ENCODE measurements at regions of chr11 and their contacts with region 1.

Region 1: GRCh38 chr11:78228467-78228866 is 39.7 kb downstream of the USP35 start:
- ATAC-seq: peak; percentile 49 to 79 (median 64)
- H3K4me3 ChIP-seq: no peak overlapping the region
- H3K27ac ChIP-seq: no peak overlapping the region
- H3K4me1 ChIP-seq: peaks cover 6 to 11% of the 10 kb centered on the region in 2 donors

Region 2: GRCh38 chr11:78397387-78397786 is 168.9 kb after region 1 on chr11:
- in situ Hi-C with region 1: loop called in 1 of 9 experiments (anchors 25 kb)
- ATAC-seq: no peak
- H3K4me3 ChIP-seq: no peak overlapping the region
- H3K27ac ChIP-seq: no peak overlapping the region
- H3K4me1 ChIP-seq: peaks cover 0 to 4% of the 10 kb centered on the region in 2 donors

Region 3: GRCh38 chr11:78564490-78565467 is 336.3 kb after region 1 on chr11:
- in situ Hi-C with region 1: loop called in 5 of 9 experiments (anchors 10 to 25 kb)
- ATAC-seq: peak in 4 of 8 experiments; percentile 41 to 67 (median 57)
- H3K4me3 ChIP-seq: no peak overlapping the region
- H3K27ac ChIP-seq: no peak overlapping the region
- H3K4me1 ChIP-seq: peaks cover 6 to 13% of the 10 kb centered on the region in 2 donors

Region 4: DNA sequence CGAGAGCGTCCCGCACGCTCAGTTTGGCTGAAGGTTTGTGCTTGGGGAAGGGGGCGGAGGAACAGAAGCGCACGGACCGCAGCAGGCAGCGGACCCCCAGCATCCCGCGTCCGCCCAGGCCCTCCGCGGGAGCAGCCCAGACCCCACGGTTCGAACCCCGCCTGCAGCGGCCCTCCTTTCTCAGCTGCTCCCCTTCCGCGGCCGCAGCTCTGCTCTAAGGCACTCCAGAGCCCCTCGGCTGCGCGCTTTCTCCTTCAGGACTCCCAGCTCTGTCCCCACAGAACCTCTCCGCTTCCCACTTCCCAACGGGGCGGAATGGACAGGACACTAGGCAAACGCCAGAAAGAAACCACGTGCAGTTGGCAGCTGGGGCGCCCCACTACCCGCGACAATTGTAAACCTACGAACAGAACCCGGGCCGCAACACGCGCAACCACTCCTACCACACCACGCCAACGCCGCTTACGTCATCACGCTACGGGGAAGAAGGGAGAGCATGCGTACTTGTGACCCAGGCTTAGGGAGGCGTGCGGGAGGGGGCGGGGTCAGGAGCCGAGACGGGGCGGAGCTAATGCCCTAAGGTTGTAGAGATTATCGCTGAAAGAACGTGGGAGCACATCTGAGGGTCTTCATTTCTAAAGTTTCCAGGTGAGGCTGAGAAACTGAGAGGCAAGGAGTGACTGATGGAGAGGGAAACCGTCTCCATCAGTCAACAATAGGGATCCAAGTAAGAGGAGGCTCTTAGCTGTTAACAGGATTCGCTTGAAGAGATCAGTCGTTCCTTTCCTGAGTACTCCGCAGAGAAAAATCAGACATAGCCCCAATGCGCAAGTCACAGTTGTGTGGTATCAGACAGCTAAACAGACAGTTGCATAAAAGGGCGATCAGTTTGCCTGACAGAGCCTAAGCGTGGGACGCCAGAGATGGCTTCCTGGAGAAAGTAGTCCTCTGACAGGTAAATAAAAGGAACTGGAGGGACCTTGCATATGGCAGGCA is 346.2 kb after region 1 on chr11 and contains the start of gene NARS2:
- in situ Hi-C with region 1: loop called in 5 of 9 experiments (anchors 10 to 25 kb)
- ATAC-seq: peak; percentile 93 to 97 (median 96)
- H3K4me3 ChIP-seq: peak within 1 kb of the TSS; percentile 51 to 87 (median 80)
- H3K27ac ChIP-seq: peak within 1 kb of the TSS; percentile 76 to 84
- H3K4me1 ChIP-seq: peaks cover 0 to 6% of the 10 kb centered on the region in 2 donors
- total RNA-seq, gene NARS2: 11.5 to 36.0 (median 28.1) TPM

Measured in motor neuron (in vitro differentiated cells).